ENCODE measurements at regions of chr16 and their contacts with region 1.

Region 1: GRCh38 chr16:21158208-21159110 is at the start of gene LDAF1:
- DNase-seq: peak; percentile 89 to 91
- ATAC-seq: peak; percentile 90 to 95 (median 92)
- H3K4me3 ChIP-seq: peak within 1 kb of the TSS; percentile 89
- H3K27ac ChIP-seq: peak within 1 kb of the TSS; percentile 82
- H3K4me1 ChIP-seq: peaks cover 34% of the 10 kb centered on the region
- H3K27me3 ChIP-seq: no peaks in the 10 kb centered on the region
- CTCF ChIP-seq: no peak
- total RNA-seq, gene LDAF1: 25.7 to 57.3 (median 39.4) TPM

Region 2: GRCh38 chr16:21277927-21278706 is 119.7 kb after region 1 on chr16 and contains the start of gene CRYM:
- intact Hi-C with region 1: loop called in 1 of 2 experiments (anchors 5 kb)
- DNase-seq: peak; percentile 50 to 70
- ATAC-seq: peak; percentile 88 to 94 (median 94)
- H3K4me3 ChIP-seq: peak within 1 kb of the TSS; percentile 66
- H3K27ac ChIP-seq: peak within 1 kb of the TSS; percentile 0
- H3K4me1 ChIP-seq: peaks cover 4% of the 10 kb centered on the region
- H3K27me3 ChIP-seq: peaks cover 0 to 25% (median 0%) of the 10 kb centered on the region in 3 donors
- CTCF ChIP-seq: peak; percentile 75
- total RNA-seq, gene CRYM: 0.25 to 33.4 (median 3.9) TPM

Region 3: DNA sequence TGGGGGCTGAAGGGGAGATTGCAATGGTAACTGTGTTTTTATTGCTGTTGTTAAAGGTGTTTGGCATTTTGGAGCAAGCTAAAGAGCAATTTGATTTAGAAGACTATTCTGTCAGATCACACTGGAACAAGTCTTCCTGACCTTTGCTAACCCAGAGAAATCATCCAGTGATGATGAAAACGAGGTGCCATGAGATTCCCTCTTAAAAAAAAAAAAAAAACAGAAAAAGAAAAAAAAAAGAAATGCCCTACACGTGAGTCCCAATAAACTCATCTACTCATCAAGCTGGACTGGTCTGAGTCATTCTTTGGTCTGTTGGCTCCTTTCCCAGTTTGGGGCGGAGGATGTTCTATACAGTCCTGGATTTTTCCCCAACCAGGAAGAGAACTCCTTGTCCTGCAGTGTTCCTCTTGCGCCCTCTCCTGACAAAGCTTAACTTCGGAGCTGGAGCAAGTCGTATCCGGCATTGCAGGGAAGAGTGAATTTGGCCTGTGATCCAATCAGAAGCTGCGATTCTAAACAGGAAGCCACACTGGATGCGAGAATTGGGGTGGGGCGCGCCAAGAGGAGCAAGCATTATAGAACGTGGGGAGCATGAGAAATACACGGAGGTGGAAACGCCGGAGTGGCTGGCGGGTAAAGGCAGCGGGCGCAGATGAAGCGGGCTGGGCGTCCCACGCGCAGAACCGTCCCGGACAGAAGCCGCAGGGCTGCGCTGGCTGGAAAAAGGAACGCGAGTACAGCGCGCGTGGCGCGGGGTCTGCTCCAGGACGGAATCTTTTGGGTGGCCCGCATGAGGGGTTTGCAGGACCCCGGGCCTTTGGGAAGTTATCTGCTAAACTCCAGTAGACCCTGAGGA is 142.1 kb after region 1 on chr16:
- intact Hi-C with region 1: loop called (anchors 1 to 5 kb)
- DNase-seq: peak; percentile 89 to 90
- ATAC-seq: peak; percentile 96 to 99 (median 98)
- H3K4me3 ChIP-seq: peak overlapping the region; percentile 64
- H3K27ac ChIP-seq: peak overlapping the region; percentile 27
- H3K4me1 ChIP-seq: peaks cover 8% of the 10 kb centered on the region
- H3K27me3 ChIP-seq: no peaks in the 10 kb centered on the region
- CTCF ChIP-seq: peak; percentile 69

Measured in psoas muscle (tissue), 8 donors.